HEK293 (cell line): ENCODE measurements at regions of chr6 and their contacts with region 1.

Region 1: GRCh38 chr6:98845211-98846020 is 11.0 kb downstream of the POU3F2 start:
- H3K4me3 ChIP-seq: peak overlapping the region; percentile 50
- H3K27ac ChIP-seq: peak overlapping the region; percentile 50
- H3K4me1 ChIP-seq: peaks cover 3% of the 10 kb centered on the region
- CTCF ChIP-seq: peak; percentile 95

Region 2: DNA sequence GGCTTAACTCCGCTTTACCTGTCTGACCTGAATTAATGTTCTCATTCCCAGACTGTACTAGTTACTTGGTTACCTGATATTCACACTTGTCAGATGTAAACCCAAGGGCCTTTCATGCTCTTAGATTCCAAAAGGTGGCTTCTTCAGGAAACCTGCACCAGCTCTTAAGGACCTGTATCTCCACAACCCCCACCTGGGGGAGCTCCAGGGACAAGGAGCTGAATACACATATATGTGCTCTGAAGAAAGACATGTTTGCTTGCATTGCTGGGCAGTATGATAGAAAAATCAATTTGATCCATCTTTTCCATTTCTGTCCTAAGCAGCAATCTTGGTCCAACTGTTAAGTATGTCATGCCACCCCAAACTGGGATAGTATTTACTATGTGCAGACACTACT is 75.9 kb before region 1 on chr6:
- CTCF ChIA-PET with region 1: interaction called, 12 read pairs
- POLR2A ChIA-PET with region 1: no interaction called
- H3K4me3 ChIP-seq: no peak overlapping the region
- H3K27ac ChIP-seq: no peak overlapping the region
- H3K4me1 ChIP-seq: no peaks in the 10 kb centered on the region
- CTCF ChIP-seq: peak; percentile 29; the same call in 1 of the 2 replicates

Region 3: GRCh38 chr6:98871057-98871456 is 25.6 kb after region 1 on chr6:
- CTCF ChIA-PET with region 1: no interaction called
- POLR2A ChIA-PET with region 1: no interaction called
- H3K4me3 ChIP-seq: no peak overlapping the region
- H3K27ac ChIP-seq: no peak overlapping the region
- H3K4me1 ChIP-seq: no peaks in the 10 kb centered on the region
- CTCF ChIP-seq: no peak